CD4-positive, alpha-beta memory T cell (primary cell): ENCODE measurements at regions of chr18 and their contacts with region 1.

Region 1: GRCh38 chr18:76803814-76804213 is 18.5 kb upstream of the ZNF236 start:
- DNase-seq: peak; percentile 59 to 69 (median 66)
- H3K4me3 ChIP-seq: no peak overlapping the region
- H3K4me3 Mint-ChIP-seq: peak overlapping the region in 6 of 8 donors; percentile 23 to 68 (median 62)
- H3K27ac ChIP-seq: no peak overlapping the region
- H3K27ac Mint-ChIP-seq: peak overlapping the region in 2 of 7 donors; percentile 58 to 75
- H3K4me1 ChIP-seq: peaks cover 16% of the 10 kb centered on the region
- H3K4me1 Mint-ChIP-seq: peaks cover 7 to 22% (median 10%) of the 10 kb centered on the region in 4 donors
- H3K27me3 ChIP-seq: peaks cover 6% of the 10 kb centered on the region
- H3K27me3 Mint-ChIP-seq: peaks cover 0 to 9% of the 10 kb centered on the region in 2 donors

Region 2: DNA sequence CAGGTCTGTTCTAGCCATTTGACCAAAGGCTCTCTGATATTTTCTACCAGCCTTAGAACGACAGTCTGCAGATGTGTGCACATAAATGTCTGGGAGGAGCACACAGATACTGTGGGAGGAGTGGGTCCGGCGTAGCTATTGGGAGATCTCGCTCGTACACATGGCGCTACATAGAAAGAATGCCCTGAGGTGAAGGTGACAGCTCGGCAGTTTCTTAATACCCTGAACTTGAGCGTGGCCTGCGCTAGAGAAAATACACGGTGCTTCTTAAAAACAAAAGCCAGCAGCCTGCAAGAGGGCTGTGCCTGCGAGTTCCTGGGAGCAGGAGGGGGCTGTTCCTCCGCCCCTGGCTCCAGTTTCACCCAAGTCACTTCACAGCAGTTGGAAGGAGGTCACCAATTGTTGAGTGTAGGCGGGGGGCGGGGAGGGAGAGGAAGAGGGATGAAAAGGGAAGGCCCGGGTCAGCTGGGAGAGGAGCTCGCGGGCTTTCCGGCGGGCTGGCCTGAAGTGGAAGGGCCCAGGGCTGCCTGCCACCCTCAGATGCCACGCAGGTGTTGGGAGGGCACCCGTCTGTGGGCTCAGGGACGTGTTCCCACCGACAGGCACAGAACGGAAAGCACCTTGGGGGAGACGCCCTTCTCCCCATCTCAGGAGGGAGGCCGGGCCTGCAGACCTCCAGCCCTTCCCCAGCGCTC is 184.0 kb before region 1 on chr18:
- CTCF ChIA-PET with region 1: no interaction called
- POLR2A ChIA-PET with region 1: no interaction called
- intact Hi-C with region 1: no loop called
- DNase-seq: no peak
- H3K4me3 ChIP-seq: no peak overlapping the region
- H3K4me3 Mint-ChIP-seq: peak overlapping the region in 3 of 8 donors; percentile 17 to 39 (median 29)
- H3K27ac ChIP-seq: no peak overlapping the region
- H3K27ac Mint-ChIP-seq: no peak overlapping the region
- H3K4me1 ChIP-seq: no peaks in the 10 kb centered on the region
- H3K4me1 Mint-ChIP-seq: peaks cover 0 to 9% (median 3%) of the 10 kb centered on the region in 4 donors
- H3K27me3 ChIP-seq: peaks cover 4% of the 10 kb centered on the region
- H3K27me3 Mint-ChIP-seq: peaks cover 25 to 52% of the 10 kb centered on the region in 2 donors

Region 3: DNA sequence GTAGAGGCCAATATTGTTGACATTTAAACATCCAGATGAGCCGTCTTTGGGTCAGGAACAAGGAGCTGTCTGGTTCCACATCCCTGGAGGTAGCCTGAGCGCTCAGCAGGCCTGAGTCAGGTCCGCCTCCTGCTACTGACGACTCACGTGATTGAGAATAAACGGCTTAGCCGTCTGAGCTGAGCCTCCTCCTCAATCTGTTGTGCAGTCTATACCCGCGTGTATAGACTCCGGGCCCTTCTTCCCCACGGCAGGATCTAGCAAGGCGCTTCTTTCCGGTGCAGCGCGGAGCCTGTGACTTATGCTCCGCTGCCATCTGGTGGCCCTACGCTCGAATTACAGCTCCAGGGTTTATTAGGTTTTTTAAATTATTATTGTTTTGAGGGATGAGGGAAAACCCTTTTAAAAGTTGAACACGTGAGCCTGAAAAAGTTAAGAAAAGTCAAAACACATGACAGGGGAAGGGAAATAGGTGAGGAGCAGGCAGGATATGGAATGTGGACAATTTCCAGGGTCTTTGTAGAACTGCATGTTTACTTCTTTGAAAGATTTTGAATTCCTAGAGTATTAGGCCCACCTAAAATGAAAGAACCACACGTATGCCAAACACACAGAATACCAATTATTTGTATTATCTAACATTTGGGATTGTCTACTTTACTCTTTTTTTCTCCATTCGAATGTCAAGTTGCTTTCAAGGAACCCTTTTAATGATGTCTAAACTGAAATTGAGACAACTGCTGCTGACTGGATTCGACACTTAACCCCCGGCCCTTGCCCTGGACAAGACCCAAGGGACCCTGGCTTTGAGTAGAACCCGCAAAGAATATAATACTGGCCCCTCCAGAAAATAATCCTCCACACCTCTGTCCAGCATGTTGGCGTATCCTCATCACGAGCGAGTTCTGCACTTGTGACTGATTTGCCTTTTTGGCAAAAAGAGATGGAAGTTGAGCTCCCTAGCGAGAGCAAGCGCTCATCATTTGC is 93.9 kb before region 1 on chr18:
- CTCF ChIA-PET with region 1: interaction called, 13 read pairs
- POLR2A ChIA-PET with region 1: no interaction called
- intact Hi-C with region 1: no loop called
- DNase-seq: peak; percentile 50 to 60 (median 57)
- H3K4me3 ChIP-seq: no peak overlapping the region
- H3K4me3 Mint-ChIP-seq: peak overlapping the region in 2 of 8 donors; percentile 16 to 26
- H3K27ac ChIP-seq: no peak overlapping the region
- H3K27ac Mint-ChIP-seq: peak overlapping the region in 2 of 7 donors; percentile 2 to 13
- H3K4me1 ChIP-seq: peaks cover 3% of the 10 kb centered on the region
- H3K4me1 Mint-ChIP-seq: peaks cover 0 to 6% (median 3%) of the 10 kb centered on the region in 4 donors
- H3K27me3 ChIP-seq: no peaks in the 10 kb centered on the region
- H3K27me3 Mint-ChIP-seq: peaks cover 1 to 2% of the 10 kb centered on the region in 2 donors

Region 4: DNA sequence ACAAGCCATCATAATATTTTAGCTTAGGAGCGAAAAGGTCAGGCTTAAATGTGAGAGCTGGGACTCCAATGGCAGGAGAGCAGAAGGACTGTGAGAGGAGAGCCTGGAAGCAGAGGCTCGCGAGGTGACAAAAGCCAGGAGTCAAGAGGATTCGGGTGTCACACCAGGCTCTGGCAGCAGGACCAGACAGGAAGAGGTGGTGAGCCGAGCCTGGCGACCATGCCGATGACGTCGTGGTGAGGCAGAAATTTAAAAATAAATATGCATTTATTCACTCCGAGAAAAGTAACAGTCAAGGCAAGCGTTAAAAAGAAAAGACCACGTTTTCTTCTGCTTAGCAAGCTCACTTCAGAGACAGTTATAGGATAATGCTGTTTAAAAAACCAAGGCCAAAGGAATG is 12.7 kb before region 1 on chr18:
- CTCF ChIA-PET with region 1: interaction called, 94 read pairs
- POLR2A ChIA-PET with region 1: interaction called, 3 read pairs
- intact Hi-C with region 1: no loop called
- DNase-seq: no peak
- H3K4me3 ChIP-seq: no peak overlapping the region
- H3K4me3 Mint-ChIP-seq: no peak overlapping the region
- H3K27ac ChIP-seq: no peak overlapping the region
- H3K27ac Mint-ChIP-seq: no peak overlapping the region
- H3K4me1 ChIP-seq: no peaks in the 10 kb centered on the region
- H3K4me1 Mint-ChIP-seq: peaks cover 0 to 10% (median 5%) of the 10 kb centered on the region in 4 donors
- H3K27me3 ChIP-seq: no peaks in the 10 kb centered on the region
- H3K27me3 Mint-ChIP-seq: peaks cover 7 to 12% of the 10 kb centered on the region in 2 donors

Region 5: DNA sequence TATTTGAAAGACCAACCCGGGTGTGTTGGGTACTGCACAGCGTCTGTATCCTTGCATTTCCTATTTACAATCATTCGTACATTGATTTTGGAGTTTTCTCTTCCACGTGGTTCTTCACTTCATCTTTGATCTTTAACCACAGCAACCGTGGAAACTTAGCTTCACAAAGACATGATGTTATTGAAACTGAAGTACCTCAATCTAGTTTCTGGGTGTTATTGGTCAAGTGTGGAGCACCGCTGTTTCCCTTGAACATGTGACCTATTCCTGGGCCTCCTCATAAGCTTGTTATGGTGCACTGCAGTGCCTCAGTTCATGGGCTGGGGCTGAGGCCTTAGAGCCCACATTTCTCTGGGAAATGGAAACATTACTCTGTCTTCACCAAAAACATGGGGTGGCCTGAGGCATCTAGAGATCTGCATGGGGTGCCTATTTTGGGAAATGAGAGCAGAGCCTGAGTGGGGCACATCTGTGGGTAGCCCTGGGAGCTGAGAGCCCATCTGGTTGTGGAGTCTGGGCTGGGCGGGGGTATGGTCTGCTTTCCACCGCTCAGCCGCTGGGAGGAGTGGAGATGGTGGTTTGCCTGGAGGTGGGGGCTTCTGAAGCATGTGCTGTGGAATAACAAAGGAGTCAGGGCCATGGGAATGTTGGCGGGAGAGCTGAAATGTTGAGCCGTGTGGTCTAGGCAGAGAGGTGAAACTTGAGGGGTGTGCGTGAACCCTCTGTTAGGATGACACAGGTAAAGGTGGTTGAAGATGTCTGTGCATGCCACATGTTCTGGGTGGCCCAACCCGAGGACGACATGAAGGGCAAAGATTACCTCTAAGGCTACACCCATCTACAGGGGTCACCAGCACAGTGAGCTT is 55.9 kb after region 1 on chr18:
- CTCF ChIA-PET with region 1: interaction called, 32 read pairs
- POLR2A ChIA-PET with region 1: no interaction called
- intact Hi-C with region 1: no loop called
- DNase-seq: peak in 4 of 5 donors; percentile 28 to 47 (median 30)
- H3K4me3 ChIP-seq: no peak overlapping the region
- H3K4me3 Mint-ChIP-seq: peak overlapping the region in 4 of 8 donors; percentile 38 to 72 (median 52)
- H3K27ac ChIP-seq: no peak overlapping the region
- H3K27ac Mint-ChIP-seq: peak overlapping the region; percentile 65 to 92 (median 81)
- H3K4me1 ChIP-seq: peaks cover 13% of the 10 kb centered on the region
- H3K4me1 Mint-ChIP-seq: peaks cover 15 to 35% (median 25%) of the 10 kb centered on the region in 4 donors
- H3K27me3 ChIP-seq: no peaks in the 10 kb centered on the region
- H3K27me3 Mint-ChIP-seq: no peaks in the 10 kb centered on the region

Region 6: DNA sequence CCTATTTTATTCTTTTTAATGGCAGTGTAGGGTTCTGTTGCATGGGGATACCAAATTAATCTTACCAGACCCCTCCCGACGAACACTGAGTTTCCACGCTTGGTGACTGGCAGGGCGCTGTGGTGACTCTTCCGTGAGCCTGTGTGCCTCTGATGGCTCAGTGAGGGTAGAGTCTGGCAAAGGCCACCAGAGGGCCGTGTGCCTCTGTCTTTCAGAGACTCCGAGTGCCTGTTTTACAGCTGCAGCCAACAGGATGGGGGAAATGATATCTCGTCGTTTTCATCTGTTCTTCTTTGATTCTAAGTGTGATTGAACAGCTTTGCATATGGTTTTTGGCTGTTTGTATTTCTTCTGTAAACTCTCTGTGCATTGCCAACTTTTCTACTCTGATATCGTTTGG is 118.3 kb after region 1 on chr18:
- CTCF ChIA-PET with region 1: interaction called, 31 read pairs
- POLR2A ChIA-PET with region 1: no interaction called
- intact Hi-C with region 1: loop called (anchors 1 kb)
- DNase-seq: peak; percentile 43 to 51 (median 47)
- H3K4me3 ChIP-seq: no peak overlapping the region
- H3K4me3 Mint-ChIP-seq: peak overlapping the region in 1 of 8 donors; percentile 47
- H3K27ac ChIP-seq: no peak overlapping the region
- H3K27ac Mint-ChIP-seq: peak overlapping the region in 6 of 7 donors; percentile 8 to 54 (median 33)
- H3K4me1 ChIP-seq: no peaks in the 10 kb centered on the region
- H3K4me1 Mint-ChIP-seq: peaks cover 7 to 21% (median 17%) of the 10 kb centered on the region in 4 donors
- H3K27me3 ChIP-seq: no peaks in the 10 kb centered on the region
- H3K27me3 Mint-ChIP-seq: no peaks in the 10 kb centered on the region

Region 7: DNA sequence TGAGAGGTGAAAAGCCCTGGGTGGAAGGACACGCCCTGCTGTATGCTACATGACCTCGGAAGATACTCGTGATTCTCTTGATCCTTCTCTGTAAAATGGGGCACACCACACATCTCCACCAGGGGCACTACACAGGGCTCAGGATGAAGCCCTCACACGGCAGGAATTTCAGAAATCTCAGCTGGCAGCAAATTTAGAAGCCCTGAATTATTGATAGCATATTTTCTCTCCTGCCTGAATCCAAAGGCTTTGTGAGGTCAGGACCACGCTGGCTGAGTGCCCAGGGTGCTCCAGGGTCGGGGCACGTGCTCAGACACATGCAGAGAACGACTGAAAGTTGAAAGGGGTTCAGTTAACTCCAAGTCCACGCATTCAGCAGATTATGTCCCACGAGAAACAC is 403.7 kb after region 1 on chr18:
- CTCF ChIA-PET with region 1: interaction called, 21 read pairs
- POLR2A ChIA-PET with region 1: no interaction called
- intact Hi-C with region 1: no loop called
- DNase-seq: peak; percentile 55 to 79 (median 67)
- H3K4me3 ChIP-seq: no peak overlapping the region
- H3K4me3 Mint-ChIP-seq: peak overlapping the region; percentile 60 to 80 (median 72)
- H3K27ac ChIP-seq: no peak overlapping the region
- H3K27ac Mint-ChIP-seq: peak overlapping the region; percentile 41 to 92 (median 85)
- H3K4me1 ChIP-seq: peaks cover 37% of the 10 kb centered on the region
- H3K4me1 Mint-ChIP-seq: peaks cover 29 to 52% (median 41%) of the 10 kb centered on the region in 4 donors
- H3K27me3 ChIP-seq: no peaks in the 10 kb centered on the region
- H3K27me3 Mint-ChIP-seq: peaks cover 0 to 4% of the 10 kb centered on the region in 2 donors